ENCODE measurements at regions of chr11 and their contacts with region 1.

Region 1: GRCh38 chr11:33987975-33988580 is 63.5 kb upstream of the CAPRIN1 start:
- DNase-seq: peak; percentile 73
- H3K4me3 Mint-ChIP-seq: no peak overlapping the region
- H3K27ac Mint-ChIP-seq: no peak overlapping the region
- H3K4me1 Mint-ChIP-seq: peaks cover 4% of the 10 kb centered on the region
- H3K27me3 Mint-ChIP-seq: peaks cover 3% of the 10 kb centered on the region

Region 2: DNA sequence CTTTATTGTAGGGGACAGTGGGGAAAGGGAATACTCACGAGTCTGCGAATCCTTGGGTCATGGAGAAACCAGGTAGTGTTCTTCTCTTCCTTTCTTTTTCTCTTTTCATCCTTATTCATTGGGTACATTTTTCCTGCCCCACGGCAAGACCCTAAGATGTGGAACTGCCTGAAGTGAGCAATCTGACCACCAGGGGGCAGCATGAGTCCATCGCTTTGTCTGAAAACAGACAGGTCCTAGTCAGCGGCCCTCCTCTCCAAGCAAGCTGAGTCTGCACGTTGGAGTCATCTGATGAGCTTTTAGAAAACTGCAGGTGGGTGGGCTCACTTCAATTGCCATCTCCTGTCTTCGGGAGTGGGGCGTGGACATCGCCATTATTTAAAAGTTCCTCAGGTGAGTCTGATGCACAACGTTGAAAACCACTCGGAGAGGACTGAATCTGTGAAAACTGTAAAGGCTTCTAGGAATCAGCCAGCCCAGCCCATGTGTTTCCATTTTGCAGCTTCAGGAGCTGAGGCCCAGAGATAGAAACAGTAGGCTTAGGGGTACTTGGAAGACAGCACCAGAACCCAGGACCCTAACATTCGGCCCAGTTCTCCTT is 179.8 kb before region 1 on chr11:
- CTCF ChIA-PET with region 1: interaction called, 11 read pairs
- POLR2A ChIA-PET with region 1: no interaction called
- intact Hi-C with region 1: no loop called
- DNase-seq: peak; percentile 89
- H3K4me3 Mint-ChIP-seq: no peak overlapping the region
- H3K27ac Mint-ChIP-seq: no peak overlapping the region
- H3K4me1 Mint-ChIP-seq: peaks cover 1% of the 10 kb centered on the region
- H3K27me3 Mint-ChIP-seq: peaks cover 6% of the 10 kb centered on the region

Region 3: GRCh38 chr11:33847251-33847650 is 140.8 kb before region 1 on chr11:
- CTCF ChIA-PET with region 1: interaction called, 15 read pairs
- POLR2A ChIA-PET with region 1: no interaction called
- intact Hi-C with region 1: no loop called
- DNase-seq: no peak
- H3K4me3 Mint-ChIP-seq: no peak overlapping the region
- H3K27ac Mint-ChIP-seq: no peak overlapping the region
- H3K4me1 Mint-ChIP-seq: no peaks in the 10 kb centered on the region
- H3K27me3 Mint-ChIP-seq: peaks cover 35% of the 10 kb centered on the region

Region 4: DNA sequence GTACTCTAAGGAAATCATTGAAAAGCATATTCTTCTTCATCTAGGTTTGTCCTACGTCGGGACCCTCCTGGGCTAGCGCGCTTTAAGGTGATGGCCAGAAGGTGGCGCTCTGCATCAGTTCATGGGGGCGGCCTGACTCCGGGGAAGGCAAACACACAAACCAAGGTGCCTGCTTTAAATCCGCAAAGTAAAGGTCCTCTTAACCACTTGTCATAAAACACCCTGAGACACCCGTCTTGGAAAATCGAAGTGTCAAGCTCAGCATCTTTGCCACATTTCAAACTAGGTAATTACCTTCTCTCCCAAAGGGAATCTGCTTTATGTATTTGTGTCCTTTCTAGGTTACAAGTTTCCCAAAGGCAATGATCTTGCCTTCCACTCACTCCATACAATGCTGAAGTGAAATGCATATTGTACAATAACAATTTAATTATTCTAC is 130.1 kb before region 1 on chr11:
- CTCF ChIA-PET with region 1: interaction called, 52 read pairs
- POLR2A ChIA-PET with region 1: no interaction called
- intact Hi-C with region 1: loop called (anchors 1 kb)
- DNase-seq: peak; percentile 81
- H3K4me3 Mint-ChIP-seq: no peak overlapping the region
- H3K27ac Mint-ChIP-seq: no peak overlapping the region
- H3K4me1 Mint-ChIP-seq: no peaks in the 10 kb centered on the region
- H3K27me3 Mint-ChIP-seq: peaks cover 37% of the 10 kb centered on the region

Region 5: DNA sequence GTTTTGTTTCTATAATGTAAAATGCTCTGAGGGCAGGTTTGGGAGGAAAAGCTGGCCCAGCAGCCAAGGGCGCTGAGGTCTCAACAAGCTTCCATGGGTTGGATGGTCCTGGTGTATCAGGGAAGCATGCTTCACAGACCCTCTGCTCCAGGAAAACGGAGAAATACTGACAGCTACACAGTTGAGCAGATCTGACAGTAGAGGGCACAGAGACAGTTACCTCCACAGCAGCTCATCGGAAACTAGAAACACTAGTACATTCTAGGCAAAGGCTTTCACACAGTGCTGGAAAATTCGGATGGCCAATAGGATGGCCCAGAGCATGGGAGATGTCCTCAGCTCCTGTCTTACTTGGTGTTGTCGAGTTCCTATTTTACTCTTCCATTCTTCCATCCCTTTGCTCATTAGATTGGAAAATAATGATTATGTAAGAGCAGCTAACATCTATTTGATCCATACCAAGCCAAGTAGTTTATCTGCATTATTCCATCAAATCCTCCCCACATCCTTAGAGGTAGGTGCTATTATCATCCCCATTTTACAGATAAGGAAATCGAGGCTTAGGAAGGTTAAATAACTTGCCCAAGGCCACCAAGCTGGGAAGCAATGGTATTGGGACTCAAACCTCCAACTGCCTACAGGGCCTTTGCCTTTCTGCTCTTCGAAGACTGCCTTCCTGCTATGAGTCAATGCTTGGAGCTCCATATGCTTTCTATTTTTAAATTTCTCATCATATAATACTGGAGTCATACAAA is 124.5 kb before region 1 on chr11:
- CTCF ChIA-PET with region 1: interaction called, 52 read pairs
- POLR2A ChIA-PET with region 1: no interaction called
- intact Hi-C with region 1: loop called (anchors 1 kb)
- DNase-seq: no peak
- H3K4me3 Mint-ChIP-seq: no peak overlapping the region
- H3K27ac Mint-ChIP-seq: no peak overlapping the region
- H3K4me1 Mint-ChIP-seq: no peaks in the 10 kb centered on the region
- H3K27me3 Mint-ChIP-seq: peaks cover 61% of the 10 kb centered on the region

Region 6: DNA sequence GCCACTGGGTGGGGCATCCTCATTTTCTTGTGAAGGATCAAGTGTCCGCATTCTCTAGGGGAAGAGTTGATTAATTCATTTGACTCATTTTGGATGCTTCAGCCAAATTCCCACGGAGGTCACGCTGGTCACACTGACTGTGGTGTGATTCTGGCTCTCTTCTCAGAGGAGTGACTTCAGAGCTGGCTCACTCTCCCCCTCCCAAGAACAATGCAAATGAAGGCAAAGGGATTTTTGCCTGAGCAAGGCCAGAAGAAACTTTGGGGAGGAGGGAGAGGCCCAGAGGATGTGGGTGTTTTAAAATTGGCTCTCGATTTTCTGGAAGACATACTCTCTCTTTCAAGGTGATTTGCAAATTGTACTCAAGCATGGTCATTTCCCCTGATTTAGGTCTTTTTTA is 45.1 kb before region 1 on chr11:
- CTCF ChIA-PET with region 1: no interaction called
- POLR2A ChIA-PET with region 1: no interaction called
- intact Hi-C with region 1: no loop called
- DNase-seq: no peak
- H3K4me3 Mint-ChIP-seq: no peak overlapping the region
- H3K27ac Mint-ChIP-seq: no peak overlapping the region
- H3K4me1 Mint-ChIP-seq: no peaks in the 10 kb centered on the region
- H3K27me3 Mint-ChIP-seq: no peaks in the 10 kb centered on the region

Region 7: GRCh38 chr11:33977676-33978075 is 10.4 kb before region 1 on chr11:
- CTCF ChIA-PET with region 1: interaction called, 14 read pairs
- POLR2A ChIA-PET with region 1: interaction called, 3 read pairs
- intact Hi-C with region 1: no loop called
- DNase-seq: no peak
- H3K4me3 Mint-ChIP-seq: no peak overlapping the region
- H3K27ac Mint-ChIP-seq: no peak overlapping the region
- H3K4me1 Mint-ChIP-seq: no peaks in the 10 kb centered on the region
- H3K27me3 Mint-ChIP-seq: peaks cover 11% of the 10 kb centered on the region